ENCODE measurements at regions of chr1 and their contacts with region 1.

Region 1: GRCh38 chr1:58783993-58784757 is at the start of gene JUN:
- DNase-seq: peak; percentile 97 to 100 (median 99)
- ATAC-seq: peak; percentile 72
- H3K4me3 ChIP-seq: peak within 1 kb of the TSS; percentile 91 to 99
- H3K4me3 Mint-ChIP-seq: peak within 1 kb of the TSS; percentile 92
- H3K27ac ChIP-seq: peak within 1 kb of the TSS; percentile 100
- H3K27ac Mint-ChIP-seq: peak within 1 kb of the TSS; percentile 97
- H3K4me1 ChIP-seq: peaks cover 4% of the 10 kb centered on the region
- H3K4me1 Mint-ChIP-seq: peaks cover 32% of the 10 kb centered on the region
- H3K27me3 ChIP-seq: no peaks in the 10 kb centered on the region
- H3K27me3 Mint-ChIP-seq: no peaks in the 10 kb centered on the region
- CTCF ChIP-seq: no peak
- total RNA-seq, gene JUN: 595 to 598 TPM

Region 2: GRCh38 chr1:58546520-58547308 is 237.5 kb before region 1 on chr1 and contains the start of gene OMA1:
- CTCF ChIA-PET with region 1: no interaction called
- POLR2A ChIA-PET with region 1: no interaction called
- intact Hi-C with region 1: loop called (anchors 5 to 10 kb)
- DNase-seq: peak; percentile 95 to 99 (median 98)
- ATAC-seq: peak; percentile 92
- H3K4me3 ChIP-seq: peak within 1 kb of the TSS; percentile 63 to 77
- H3K4me3 Mint-ChIP-seq: peak within 1 kb of the TSS; percentile 97
- H3K27ac ChIP-seq: peak within 1 kb of the TSS; percentile 95 to 97
- H3K27ac Mint-ChIP-seq: peak within 1 kb of the TSS; percentile 99
- H3K4me1 ChIP-seq: peaks cover 12% of the 10 kb centered on the region
- H3K4me1 Mint-ChIP-seq: peaks cover 32% of the 10 kb centered on the region
- H3K27me3 ChIP-seq: no peaks in the 10 kb centered on the region
- H3K27me3 Mint-ChIP-seq: no peaks in the 10 kb centered on the region
- CTCF ChIP-seq: peak; percentile 97
- total RNA-seq, gene OMA1: 25.1 to 31.2 TPM

Region 3: DNA sequence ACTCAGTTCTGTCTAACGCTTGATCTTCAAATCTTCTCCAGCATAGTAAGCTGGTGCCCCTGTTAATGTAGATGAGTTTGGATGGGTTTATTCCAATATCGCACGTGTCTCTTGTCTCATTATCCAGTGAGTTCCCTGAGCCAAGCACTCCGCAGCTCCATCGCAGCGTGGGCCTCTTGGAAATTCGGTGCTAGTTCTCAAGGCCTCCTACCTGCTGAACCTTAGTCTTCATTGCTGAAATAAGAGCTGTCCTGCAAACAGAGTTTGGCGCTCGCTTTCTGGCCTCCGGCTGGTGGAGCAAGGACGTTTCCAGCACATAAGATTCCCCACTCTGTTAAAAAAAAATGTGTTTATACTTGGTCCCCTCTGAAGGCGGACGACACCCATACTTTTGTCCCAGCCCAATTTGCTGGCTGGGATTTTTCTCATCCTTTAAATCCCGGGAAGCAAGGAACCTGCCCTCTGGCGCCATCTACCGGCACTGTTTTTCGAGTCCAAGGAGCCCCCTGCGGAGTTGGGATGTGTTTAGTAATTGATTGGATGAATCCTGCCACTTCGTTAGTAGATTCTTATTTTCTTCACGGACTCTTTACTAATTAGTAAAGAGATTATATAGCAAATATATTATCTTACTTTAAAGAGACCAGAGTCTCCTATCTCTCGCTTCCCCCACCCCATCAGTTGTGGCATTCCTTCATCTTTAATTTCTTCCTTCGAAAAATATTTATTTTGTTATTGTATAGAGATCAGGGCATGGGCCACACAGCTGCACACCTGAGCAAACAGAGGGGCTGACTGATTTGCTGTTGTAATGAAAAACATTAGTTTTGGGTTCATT is 15.0 kb before region 1 on chr1:
- CTCF ChIA-PET with region 1: interaction called, 9 read pairs
- POLR2A ChIA-PET with region 1: interaction called, 17 read pairs
- intact Hi-C with region 1: no loop called
- DNase-seq: peak in 6 of 9 experiments; percentile 28 to 58 (median 54)
- ATAC-seq: no peak
- H3K4me3 ChIP-seq: no peak overlapping the region
- H3K4me3 Mint-ChIP-seq: no peak overlapping the region
- H3K27ac ChIP-seq: no peak overlapping the region
- H3K27ac Mint-ChIP-seq: no peak overlapping the region
- H3K4me1 ChIP-seq: peaks cover 6% of the 10 kb centered on the region
- H3K4me1 Mint-ChIP-seq: peaks cover 11% of the 10 kb centered on the region
- H3K27me3 ChIP-seq: no peaks in the 10 kb centered on the region
- H3K27me3 Mint-ChIP-seq: peaks cover 2% of the 10 kb centered on the region
- CTCF ChIP-seq: peak; percentile 67

Region 4: DNA sequence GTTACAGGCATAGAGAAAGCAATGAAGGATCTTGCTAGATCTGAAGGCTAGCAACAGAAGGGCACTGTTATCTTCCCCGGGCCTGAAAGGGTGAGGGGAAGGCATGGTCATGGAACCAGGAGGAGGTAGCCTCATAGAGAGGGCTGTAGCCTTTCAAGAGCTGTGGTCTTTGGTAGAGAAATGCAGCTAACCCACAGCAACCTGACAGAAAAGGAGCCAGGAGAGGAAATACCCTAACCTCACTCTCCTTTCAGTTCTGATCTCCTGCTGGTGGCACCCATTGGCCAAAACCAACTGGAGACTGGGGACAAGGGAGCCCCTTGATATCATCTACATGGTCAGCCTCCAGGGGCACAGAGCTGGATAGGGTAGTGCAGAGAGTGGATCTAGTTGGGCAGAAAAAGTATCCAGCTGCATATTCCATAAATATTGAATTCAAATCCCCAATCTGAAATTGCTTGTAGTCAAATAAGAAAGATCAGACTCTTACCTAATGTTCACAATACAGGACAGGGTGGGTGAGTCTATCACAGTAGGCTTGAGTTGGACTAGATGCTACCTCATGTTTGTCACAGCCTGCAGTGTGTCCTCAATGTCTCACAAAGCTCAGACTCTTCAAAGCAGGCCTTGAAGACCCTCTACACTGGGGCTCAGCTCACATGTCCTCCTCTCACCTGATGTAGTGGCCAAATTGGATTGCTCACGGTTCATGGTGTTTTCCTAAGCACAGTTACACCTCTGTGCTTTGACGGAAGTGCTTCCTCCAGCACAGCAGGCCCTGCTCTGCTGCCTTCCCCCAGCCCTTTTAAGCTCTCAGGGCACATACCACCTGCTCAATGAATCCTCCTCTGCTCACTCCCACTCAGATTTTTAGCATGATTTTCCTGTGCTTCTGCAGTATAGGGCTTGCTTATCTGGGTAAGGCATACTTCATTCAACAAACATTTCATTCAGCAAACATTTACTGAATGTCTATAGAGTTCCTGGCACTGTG is 73.8 kb after region 1 on chr1:
- CTCF ChIA-PET with region 1: interaction called, 4 read pairs
- POLR2A ChIA-PET with region 1: interaction called, 15 read pairs
- intact Hi-C with region 1: no loop called
- DNase-seq: peak in 7 of 9 experiments; percentile 5 to 69 (median 36)
- ATAC-seq: peak; percentile 82
- H3K4me3 ChIP-seq: no peak overlapping the region
- H3K4me3 Mint-ChIP-seq: peak overlapping the region; percentile 48
- H3K27ac ChIP-seq: peak overlapping the region; percentile 5 to 64
- H3K27ac Mint-ChIP-seq: peak overlapping the region; percentile 91
- H3K4me1 ChIP-seq: peaks cover 37% of the 10 kb centered on the region
- H3K4me1 Mint-ChIP-seq: peaks cover 64% of the 10 kb centered on the region
- H3K27me3 ChIP-seq: no peaks in the 10 kb centered on the region
- H3K27me3 Mint-ChIP-seq: no peaks in the 10 kb centered on the region
- CTCF ChIP-seq: no peak

Region 5: GRCh38 chr1:59020151-59020997 is 236.2 kb after region 1 on chr1:
- CTCF ChIA-PET with region 1: interaction called, 3 read pairs
- POLR2A ChIA-PET with region 1: interaction called, 3 read pairs
- intact Hi-C with region 1: loop called in 1 of 2 experiments (anchors 1 kb)
- DNase-seq: peak in 8 of 9 experiments; percentile 18 to 82 (median 54)
- ATAC-seq: peak; percentile 87
- H3K4me3 ChIP-seq: peak overlapping the region; percentile 6 to 22
- H3K4me3 Mint-ChIP-seq: peak overlapping the region; percentile 81
- H3K27ac ChIP-seq: peak overlapping the region; percentile 24 to 76
- H3K27ac Mint-ChIP-seq: peak overlapping the region; percentile 92
- H3K4me1 ChIP-seq: peaks cover 15% of the 10 kb centered on the region
- H3K4me1 Mint-ChIP-seq: peaks cover 25% of the 10 kb centered on the region
- H3K27me3 ChIP-seq: no peaks in the 10 kb centered on the region
- H3K27me3 Mint-ChIP-seq: no peaks in the 10 kb centered on the region
- CTCF ChIP-seq: no peak

Region 6: GRCh38 chr1:59146651-59147358 is 362.6 kb after region 1 on chr1:
- CTCF ChIA-PET with region 1: interaction called, 3 read pairs
- POLR2A ChIA-PET with region 1: no interaction called
- intact Hi-C with region 1: loop called in 1 of 2 experiments (anchors 10 kb)
- DNase-seq: peak; percentile 13 to 79 (median 36)
- ATAC-seq: peak; percentile 77
- H3K4me3 ChIP-seq: peak overlapping the region; percentile 60 to 63
- H3K4me3 Mint-ChIP-seq: peak overlapping the region; percentile 90
- H3K27ac ChIP-seq: peak overlapping the region in 1 of 2 experiments; percentile 51
- H3K27ac Mint-ChIP-seq: peak overlapping the region; percentile 87
- H3K4me1 ChIP-seq: peaks cover 5% of the 10 kb centered on the region
- H3K4me1 Mint-ChIP-seq: peaks cover 18% of the 10 kb centered on the region
- H3K27me3 ChIP-seq: no peaks in the 10 kb centered on the region
- H3K27me3 Mint-ChIP-seq: no peaks in the 10 kb centered on the region
- CTCF ChIP-seq: peak; percentile 23

Region 7: GRCh38 chr1:59814180-59814900 is 1030.2 kb after region 1 on chr1:
- CTCF ChIA-PET with region 1: no interaction called
- POLR2A ChIA-PET with region 1: no interaction called
- intact Hi-C with region 1: loop called in 1 of 2 experiments (anchors 10 kb)
- DNase-seq: peak; percentile 73 to 97 (median 88)
- ATAC-seq: peak; percentile 94
- H3K4me3 ChIP-seq: peak overlapping the region; percentile 64 to 72
- H3K4me3 Mint-ChIP-seq: no peak overlapping the region
- H3K27ac ChIP-seq: peak overlapping the region; percentile 43 to 59
- H3K27ac Mint-ChIP-seq: peak overlapping the region; percentile 89
- H3K4me1 ChIP-seq: peaks cover 15% of the 10 kb centered on the region
- H3K4me1 Mint-ChIP-seq: peaks cover 4% of the 10 kb centered on the region
- H3K27me3 ChIP-seq: peaks cover 0 to 4% of the 10 kb centered on the region in 2 experiments
- H3K27me3 Mint-ChIP-seq: peaks cover 7% of the 10 kb centered on the region
- CTCF ChIP-seq: no peak